Activated CD8-positive, alpha-beta T cell treated with anti-CD3 and anti-CD28 coated beads, Interleukin-2, amount 10 ng/mL, durations not matched to agents 7 days and 5 days (primary cell): ENCODE measurements at regions of chr1 and their contacts with region 1.

Region 1: DNA sequence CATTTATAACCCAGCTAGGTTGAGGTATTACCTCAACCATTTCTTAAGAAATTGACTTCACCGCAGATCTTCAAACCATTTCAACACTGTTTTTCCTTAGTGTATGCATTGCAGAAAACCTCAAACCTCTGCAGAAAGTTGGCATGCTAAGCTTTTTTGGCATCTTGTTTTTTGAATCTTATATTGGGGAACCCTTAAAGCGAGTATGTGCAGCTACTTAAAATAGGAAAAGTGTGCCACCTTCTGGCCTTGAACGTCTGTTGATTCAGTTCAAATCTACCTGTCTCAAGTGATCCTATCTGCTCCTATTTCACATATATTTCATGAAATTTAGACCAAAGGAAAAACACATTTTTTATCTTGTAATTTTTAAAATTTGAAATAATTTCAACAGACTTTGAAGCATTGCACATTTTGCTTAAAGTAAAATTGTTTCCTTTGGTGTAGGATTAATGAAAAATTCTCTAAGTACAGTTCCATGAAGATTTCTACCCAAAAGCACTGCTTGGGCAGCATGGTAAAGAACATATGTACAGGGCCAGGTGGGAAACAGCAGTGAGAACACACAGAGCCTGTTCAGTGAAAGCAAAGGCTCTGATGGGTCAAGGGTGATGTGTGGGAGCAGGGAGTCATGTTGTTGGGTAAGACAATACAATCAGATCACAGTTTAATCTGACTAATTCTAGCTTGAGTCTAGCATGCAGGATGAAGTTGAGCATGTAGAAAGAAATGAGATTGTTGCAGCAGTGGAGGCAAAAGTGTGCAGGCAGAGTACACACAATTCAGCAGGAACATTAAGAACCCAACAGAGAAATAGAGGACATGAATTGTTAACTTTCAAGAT is 17.2 kb downstream of the HENMT1 start:
- DNase-seq: peak; percentile 75
- ATAC-seq: no peak
- H3K4me3 Mint-ChIP-seq: no peak overlapping the region
- H3K27ac Mint-ChIP-seq: peak overlapping the region; percentile 98
- H3K4me1 Mint-ChIP-seq: peaks cover 85% of the 10 kb centered on the region
- H3K27me3 Mint-ChIP-seq: no peaks in the 10 kb centered on the region

Region 2: GRCh38 chr1:108154296-108154695 is 489.4 kb before region 1 on chr1:
- CTCF ChIA-PET with region 1: no interaction called
- POLR2A ChIA-PET with region 1: no interaction called
- DNase-seq: no peak
- ATAC-seq: no peak
- H3K4me3 Mint-ChIP-seq: no peak overlapping the region
- H3K27ac Mint-ChIP-seq: no peak overlapping the region
- H3K4me1 Mint-ChIP-seq: no peaks in the 10 kb centered on the region
- H3K27me3 Mint-ChIP-seq: no peaks in the 10 kb centered on the region

Region 3: GRCh38 chr1:108199781-108200570 is 443.7 kb before region 1 on chr1 and contains the start of gene SLC25A24:
- CTCF ChIA-PET with region 1: interaction called, 12 read pairs
- POLR2A ChIA-PET with region 1: interaction called, 4 read pairs
- DNase-seq: peak; percentile 84
- ATAC-seq: peak; percentile 98
- H3K4me3 Mint-ChIP-seq: peak within 1 kb of the TSS; percentile 88
- H3K27ac Mint-ChIP-seq: peak within 1 kb of the TSS; percentile 87
- H3K4me1 Mint-ChIP-seq: peaks cover 27% of the 10 kb centered on the region
- H3K27me3 Mint-ChIP-seq: peaks cover 11% of the 10 kb centered on the region
- total RNA-seq, gene SLC25A24: 26.9 to 29.2 TPM

Region 4: GRCh38 chr1:108541861-108542260 is 101.9 kb before region 1 on chr1:
- CTCF ChIA-PET with region 1: no interaction called
- POLR2A ChIA-PET with region 1: no interaction called
- DNase-seq: no peak
- ATAC-seq: no peak
- H3K4me3 Mint-ChIP-seq: no peak overlapping the region
- H3K27ac Mint-ChIP-seq: no peak overlapping the region
- H3K4me1 Mint-ChIP-seq: no peaks in the 10 kb centered on the region
- H3K27me3 Mint-ChIP-seq: peaks cover 33% of the 10 kb centered on the region

Region 5: GRCh38 chr1:108570128-108570527 is 73.6 kb before region 1 on chr1:
- CTCF ChIA-PET with region 1: interaction called, 25 read pairs
- POLR2A ChIA-PET with region 1: interaction called, 4 read pairs
- DNase-seq: peak; percentile 60
- ATAC-seq: peak; percentile 99
- H3K4me3 Mint-ChIP-seq: no peak overlapping the region
- H3K27ac Mint-ChIP-seq: no peak overlapping the region
- H3K4me1 Mint-ChIP-seq: peaks cover 4% of the 10 kb centered on the region
- H3K27me3 Mint-ChIP-seq: no peaks in the 10 kb centered on the region

Region 6: DNA sequence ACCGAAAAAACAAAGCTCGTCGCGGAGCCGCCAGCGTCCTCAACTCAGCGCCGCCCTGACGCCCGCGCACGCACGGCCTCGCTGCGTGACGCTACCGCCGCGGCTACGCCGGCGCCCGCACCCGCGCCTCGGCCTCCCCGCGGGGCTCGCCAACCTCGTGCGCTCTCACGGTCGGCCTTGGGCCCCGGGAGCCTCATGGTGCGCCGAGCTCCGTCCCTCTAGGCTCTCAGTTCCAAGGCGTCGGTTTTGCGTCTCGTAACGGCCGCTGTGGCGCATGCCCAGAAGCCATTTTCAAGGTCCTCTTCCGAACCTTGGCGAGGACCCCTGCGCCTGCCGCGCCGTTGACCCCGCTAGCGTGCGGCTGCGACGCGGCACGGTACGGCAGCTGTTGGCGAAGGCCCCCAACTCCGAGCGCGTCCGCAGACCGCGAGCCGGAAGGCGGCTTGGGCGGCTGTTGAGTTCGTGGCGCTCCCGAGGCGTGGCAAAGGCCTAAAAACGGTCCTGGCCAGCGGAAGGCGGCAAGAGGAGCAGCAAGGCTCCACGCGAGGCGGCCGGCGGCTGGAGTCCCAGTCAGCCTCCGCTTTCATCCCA is 17.4 kb after region 1 on chr1 and contains the start of gene HENMT1:
- CTCF ChIA-PET with region 1: interaction called, 52 read pairs
- POLR2A ChIA-PET with region 1: interaction called, 147 read pairs
- DNase-seq: peak; percentile 84
- ATAC-seq: peak; percentile 86
- H3K4me3 Mint-ChIP-seq: peak within 1 kb of the TSS; percentile 85
- H3K27ac Mint-ChIP-seq: peak within 1 kb of the TSS; percentile 97
- H3K4me1 Mint-ChIP-seq: peaks cover 51% of the 10 kb centered on the region
- H3K27me3 Mint-ChIP-seq: no peaks in the 10 kb centered on the region
- total RNA-seq, gene HENMT1: 38.7 to 40.5 TPM

Region 7: DNA sequence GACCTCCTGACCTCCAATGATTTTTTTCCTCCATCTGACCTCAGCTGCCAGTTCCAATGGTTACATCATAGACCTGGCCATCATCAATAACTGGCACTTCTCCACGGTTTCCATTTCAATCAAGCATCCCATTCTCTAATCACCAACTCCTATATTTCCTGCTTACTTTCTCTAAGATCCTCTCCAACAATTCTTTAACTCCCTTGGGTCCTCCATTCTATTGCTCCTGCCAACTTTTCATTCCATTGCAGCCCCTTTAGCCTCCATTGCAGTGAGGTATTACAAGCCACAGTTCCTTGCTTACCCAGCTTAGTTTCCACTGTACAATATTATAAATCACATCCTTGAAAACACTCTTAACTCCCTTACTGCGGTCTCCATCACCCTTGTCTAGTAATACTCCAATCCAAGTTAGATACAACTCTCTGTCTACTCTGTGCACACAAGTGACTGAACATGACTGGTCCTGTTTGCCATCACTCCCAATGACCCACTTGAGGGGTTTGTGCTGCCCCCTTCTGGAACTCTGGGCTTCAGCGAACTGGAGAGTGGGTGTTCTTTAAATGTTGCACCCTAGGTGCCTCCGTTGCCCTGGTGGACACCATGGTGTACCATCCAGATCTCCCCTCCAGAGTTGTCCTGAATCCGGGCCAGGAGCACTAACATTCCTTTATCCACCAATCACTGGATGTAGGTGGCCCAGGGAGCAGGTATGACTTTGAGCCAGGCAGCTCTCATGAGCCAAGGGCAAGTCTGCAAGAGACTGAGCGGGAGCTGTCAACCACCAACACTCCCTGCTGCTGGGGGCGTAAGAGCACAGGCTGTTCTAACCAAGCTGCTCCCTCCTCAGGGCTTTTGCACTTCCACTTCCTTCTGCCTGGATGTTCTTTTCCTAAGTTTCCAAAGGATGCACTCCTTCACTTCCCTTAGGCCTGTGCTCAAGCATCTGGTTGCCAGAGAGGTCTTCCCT is 65.3 kb after region 1 on chr1:
- CTCF ChIA-PET with region 1: interaction called, 30 read pairs
- POLR2A ChIA-PET with region 1: interaction called, 12 read pairs
- DNase-seq: peak; percentile 75
- ATAC-seq: peak; percentile 82
- H3K4me3 Mint-ChIP-seq: no peak overlapping the region
- H3K27ac Mint-ChIP-seq: no peak overlapping the region
- H3K4me1 Mint-ChIP-seq: peaks cover 31% of the 10 kb centered on the region
- H3K27me3 Mint-ChIP-seq: peaks cover 10% of the 10 kb centered on the region

Region 8: GRCh38 chr1:108947871-108948525 is 304.3 kb after region 1 on chr1:
- CTCF ChIA-PET with region 1: no interaction called
- POLR2A ChIA-PET with region 1: no interaction called
- DNase-seq: no peak
- ATAC-seq: no peak
- H3K4me3 Mint-ChIP-seq: no peak overlapping the region
- H3K27ac Mint-ChIP-seq: no peak overlapping the region
- H3K4me1 Mint-ChIP-seq: peaks cover 4% of the 10 kb centered on the region
- H3K27me3 Mint-ChIP-seq: no peaks in the 10 kb centered on the region